ENCODE measurements at regions of chr21 and their contacts with region 1.

Region 1: DNA sequence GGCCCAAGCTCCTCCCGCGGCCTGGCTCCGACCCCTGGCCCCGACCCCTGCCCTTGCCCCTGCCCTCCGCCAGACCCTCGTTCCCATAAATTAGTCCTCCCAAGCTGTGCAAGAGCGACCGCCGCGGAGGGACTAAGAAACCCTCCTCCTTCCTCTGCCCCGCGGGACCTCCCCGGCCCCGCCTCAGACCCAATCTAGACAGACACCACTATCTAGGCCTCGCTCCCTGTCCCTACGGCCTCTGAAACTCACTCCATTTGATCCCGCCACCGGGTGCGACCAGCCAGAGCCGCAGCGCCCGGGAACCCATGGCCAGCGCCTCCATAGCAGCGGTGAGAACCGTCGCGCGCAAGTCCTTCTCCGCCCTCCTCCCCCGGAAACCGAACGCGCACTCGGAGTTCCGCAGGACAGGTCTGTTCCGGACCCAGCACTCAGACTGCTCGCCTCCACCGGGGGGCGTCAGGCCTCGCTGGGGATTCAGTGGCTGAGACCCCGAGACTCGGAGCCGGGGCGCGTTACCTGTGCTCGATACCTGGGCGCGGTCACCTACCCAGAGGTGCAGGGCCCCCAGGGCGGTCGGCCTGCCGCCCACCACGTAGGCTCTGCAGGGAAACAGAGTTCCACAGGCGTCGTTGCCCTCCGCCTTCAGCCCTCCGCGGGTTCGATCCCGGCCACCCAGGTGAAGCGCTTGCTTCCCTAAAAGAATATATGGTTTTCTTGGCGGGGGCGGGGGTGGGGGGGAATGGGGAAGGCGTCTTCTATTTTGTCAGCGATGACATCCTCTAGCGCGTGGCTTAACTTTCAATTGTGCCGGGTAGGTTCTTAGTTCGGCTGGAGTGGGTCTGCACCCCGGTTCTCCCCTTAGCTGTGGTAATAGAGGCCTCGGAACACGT is at the start of gene MRPL39:
- DNase-seq: peak; percentile 95
- ATAC-seq: peak; percentile 98
- total RNA-seq, gene MRPL39: 59.4 TPM

Region 2: DNA sequence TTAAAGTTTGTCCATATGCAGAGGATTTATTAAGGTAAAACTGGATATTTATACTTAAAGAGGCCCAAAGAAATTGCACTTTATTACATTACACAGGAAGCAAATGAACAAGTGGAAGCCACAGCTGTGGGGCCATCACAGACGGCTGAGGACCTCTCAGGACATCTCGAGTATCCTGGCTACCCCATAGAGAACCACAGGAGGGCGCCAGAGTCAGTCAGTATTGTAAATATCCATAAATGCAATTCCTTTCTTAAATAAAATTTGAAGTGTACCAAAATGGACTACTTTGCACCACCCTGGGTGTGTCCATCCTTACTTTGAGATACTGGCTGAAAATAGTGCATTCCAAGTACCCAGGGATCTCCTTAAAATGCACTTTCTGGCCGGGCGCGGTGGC is 257.3 kb before region 1 on chr21:
- intact Hi-C with region 1: no loop called
- DNase-seq: no peak
- ATAC-seq: no peak

Region 3: DNA sequence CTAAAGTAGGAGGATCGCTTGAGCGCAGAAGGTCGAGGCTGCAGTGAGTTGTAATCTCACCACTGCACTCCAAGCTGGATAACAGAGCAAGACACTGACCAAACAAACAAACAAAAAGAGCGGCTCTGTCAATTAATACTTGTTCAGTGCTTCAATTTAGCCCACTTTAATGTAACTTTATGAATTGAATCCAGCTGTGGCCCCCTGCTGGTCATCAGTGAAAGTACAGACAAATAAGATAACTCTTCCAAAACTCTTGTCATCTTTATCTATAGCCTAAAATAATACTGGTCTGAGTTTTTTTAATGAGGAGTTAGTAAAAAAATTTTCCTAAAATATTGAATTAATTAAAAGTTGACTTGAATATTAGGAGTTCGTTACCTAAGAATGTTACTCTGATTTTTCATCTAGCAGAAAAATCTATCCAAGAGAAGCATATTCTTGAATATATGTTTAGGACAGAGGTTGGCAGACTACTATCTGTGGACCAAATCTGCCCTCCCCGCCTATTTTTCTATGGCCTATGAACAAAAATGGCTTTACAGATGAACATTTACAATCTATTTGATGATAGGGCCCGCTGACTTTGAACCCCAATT is 101.2 kb after region 1 on chr21:
- intact Hi-C with region 1: loop called (anchors 1 kb)
- DNase-seq: no peak
- ATAC-seq: no peak

Region 4: DNA sequence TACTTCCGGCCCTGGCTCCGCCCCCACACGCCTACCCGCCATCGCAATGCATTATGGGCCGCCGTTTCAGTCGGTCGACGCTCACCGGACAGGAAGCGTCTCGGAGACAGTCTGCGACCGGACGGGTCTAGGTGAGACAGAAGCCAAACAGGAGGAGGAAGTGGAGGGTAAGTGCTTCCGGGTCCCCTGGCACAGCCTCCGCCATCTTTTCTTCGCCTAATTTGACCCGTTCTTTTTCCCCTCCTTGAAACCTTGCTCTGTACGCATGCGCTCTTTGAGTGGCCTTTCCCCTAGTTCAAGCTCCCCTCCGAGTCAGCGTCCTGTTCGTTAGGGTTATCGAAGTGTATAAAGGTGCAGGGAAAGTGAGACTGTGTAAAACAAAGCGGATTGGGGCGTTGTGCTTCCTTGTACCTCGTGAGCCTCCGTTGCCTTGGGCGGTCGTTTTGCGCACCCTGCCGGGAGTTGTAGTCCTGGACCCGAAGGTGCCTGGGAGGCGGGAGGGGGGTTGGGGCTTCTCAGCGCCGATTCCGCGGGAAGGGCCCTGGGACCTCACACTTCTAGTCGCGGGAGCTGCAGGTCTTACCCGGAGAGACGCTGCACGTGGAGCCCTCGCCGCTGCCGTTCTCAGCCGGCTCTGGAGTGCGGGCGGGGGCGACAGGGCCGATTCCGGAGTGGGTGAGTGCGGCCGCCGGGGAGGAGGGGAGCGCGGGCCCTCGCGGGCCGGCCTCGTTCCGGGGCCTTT is 127.7 kb after region 1 on chr21 and contains the starts of genes ATP5PF and GABPA:
- intact Hi-C with region 1: loop called (anchors 1 kb)
- DNase-seq: peak; percentile 98
- ATAC-seq: peak; percentile 97
- total RNA-seq, gene ATP5PF: 969 TPM
- total RNA-seq, gene GABPA: 18.3 TPM

Region 5: GRCh38 chr21:25759573-25759972 is 152.2 kb after region 1 on chr21:
- intact Hi-C with region 1: loop called (anchors 5 kb)
- DNase-seq: no peak
- ATAC-seq: no peak

Measured in Right ventricle myocardium inferior (tissue), 1 donor.